Mammary epithelial cell (primary cell): ENCODE measurements at regions of chr18 and their contacts with region 1.

Region 1: GRCh38 chr18:68847219-68847837 is 49.4 kb downstream of the CCDC102B start:
- DNase-seq: no peak
- H3K4me3 ChIP-seq: no peak overlapping the region
- H3K27ac ChIP-seq: no peak overlapping the region
- H3K4me1 ChIP-seq: no peaks in the 10 kb centered on the region
- H3K27me3 ChIP-seq: no peaks in the 10 kb centered on the region
- CTCF ChIP-seq: peak; percentile 64 to 87

Region 2: GRCh38 chr18:69929041-69929774 is 1081.9 kb after region 1 on chr18:
- CTCF ChIA-PET with region 1: no interaction called
- dilution Hi-C with region 1: no loop called
- in situ Hi-C with region 1: no loop called
- intact Hi-C with region 1: no loop called
- DNase-seq: no peak
- H3K4me3 ChIP-seq: no peak overlapping the region
- H3K27ac ChIP-seq: no peak overlapping the region
- H3K4me1 ChIP-seq: no peaks in the 10 kb centered on the region
- H3K27me3 ChIP-seq: no peaks in the 10 kb centered on the region
- CTCF ChIP-seq: no peak

Region 3: GRCh38 chr18:70085641-70086040 is 1238.3 kb after region 1 on chr18:
- CTCF ChIA-PET with region 1: no interaction called
- dilution Hi-C with region 1: no loop called
- in situ Hi-C with region 1: loop called in 1 of 2 experiments (anchors 25 kb)
- intact Hi-C with region 1: loop called (anchors 1 kb)
- DNase-seq: no peak
- H3K4me3 ChIP-seq: no peak overlapping the region
- H3K27ac ChIP-seq: no peak overlapping the region
- H3K4me1 ChIP-seq: no peaks in the 10 kb centered on the region
- H3K27me3 ChIP-seq: no peaks in the 10 kb centered on the region
- CTCF ChIP-seq: no peak